ENCODE measurements at regions of chr4 and their contacts with region 1.

Region 1: GRCh38 chr4:173257732-173258717 is 76.1 kb downstream of the HMGB2 start:
- DNase-seq: peak; percentile 84

Region 2: DNA sequence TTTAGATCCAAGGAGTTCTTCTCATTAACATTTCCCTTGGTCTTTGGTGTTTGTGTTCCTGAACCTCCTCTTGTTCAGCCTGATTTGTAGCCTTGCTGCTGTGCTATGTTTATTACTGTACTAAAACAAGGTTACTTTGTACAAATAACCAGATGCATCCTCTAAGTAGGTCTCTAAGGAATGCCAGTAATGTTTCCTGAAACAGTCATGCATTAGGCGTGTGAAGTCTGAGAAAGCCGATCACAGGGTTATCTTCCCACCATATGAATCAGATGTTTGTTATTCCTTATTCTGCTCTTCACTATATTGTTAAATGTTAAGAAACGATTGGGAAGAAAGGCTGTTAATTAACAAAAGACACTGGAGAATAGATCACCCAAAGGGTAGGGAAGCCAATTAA is 1377.9 kb before region 1 on chr4:
- intact Hi-C with region 1: no loop called
- DNase-seq: no peak

Region 3: GRCh38 chr4:173013232-173013930 is 244.6 kb before region 1 on chr4:
- intact Hi-C with region 1: loop called (anchors 5 kb)
- DNase-seq: no peak

Region 4: GRCh38 chr4:173025131-173025530 is 232.9 kb before region 1 on chr4:
- intact Hi-C with region 1: loop called in 1 of 2 experiments (anchors 2 kb)
- DNase-seq: no peak

Region 5: DNA sequence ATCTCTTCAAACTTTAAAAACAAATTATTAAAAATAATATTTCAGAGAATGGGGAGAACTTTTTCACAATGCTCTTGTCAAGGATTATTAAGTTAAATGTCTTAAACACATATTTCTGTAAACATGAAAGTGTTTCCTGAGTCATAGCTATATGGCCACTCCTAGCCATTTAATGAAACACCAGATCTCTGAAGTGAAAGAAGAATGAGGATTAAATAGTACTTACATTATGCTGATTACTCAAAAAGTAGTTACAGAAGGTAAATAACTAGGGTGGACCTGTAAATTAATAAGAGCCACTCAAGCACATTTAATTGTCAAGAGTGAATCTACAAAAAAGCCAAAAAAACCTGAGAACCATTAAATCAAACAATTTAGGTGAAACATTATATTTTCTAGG is 147.0 kb before region 1 on chr4:
- intact Hi-C with region 1: no loop called
- DNase-seq: no peak

Region 6: DNA sequence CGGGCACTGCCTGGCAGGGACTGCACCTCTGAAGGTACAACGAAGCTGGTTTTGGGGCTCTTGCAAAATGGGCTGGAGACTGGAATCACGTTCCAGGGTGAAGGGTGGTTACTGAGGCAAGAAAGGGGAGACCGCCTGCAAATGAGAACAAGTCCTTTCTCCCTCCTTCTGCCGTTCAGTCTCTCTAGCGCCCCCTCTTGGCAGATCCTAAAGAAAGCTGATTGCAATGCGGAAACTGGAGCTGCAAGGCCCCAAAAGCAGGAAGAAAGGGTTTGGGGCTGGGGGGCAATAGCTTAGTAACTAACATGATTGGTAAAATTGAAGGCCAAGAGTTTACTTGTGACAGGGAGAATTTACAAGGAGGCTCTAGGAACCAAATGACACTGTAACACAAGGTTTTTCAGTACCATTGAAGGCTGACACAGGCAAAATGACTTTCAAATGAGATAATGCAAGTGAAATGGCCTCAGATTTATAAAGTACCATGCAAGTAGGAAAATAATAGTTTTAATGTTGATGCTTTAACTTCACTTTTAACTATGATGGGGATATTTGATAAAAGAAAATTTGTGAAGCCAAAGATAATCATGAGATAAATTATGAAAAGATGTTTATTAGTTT is 494.7 kb after region 1 on chr4:
- intact Hi-C with region 1: no loop called
- DNase-seq: no peak

Measured in posterior vena cava (tissue), 2 donors.